Common myeloid progenitor, CD34-positive (primary cell): ENCODE measurements at regions of chr13 and their contacts with region 1.

Region 1: DNA sequence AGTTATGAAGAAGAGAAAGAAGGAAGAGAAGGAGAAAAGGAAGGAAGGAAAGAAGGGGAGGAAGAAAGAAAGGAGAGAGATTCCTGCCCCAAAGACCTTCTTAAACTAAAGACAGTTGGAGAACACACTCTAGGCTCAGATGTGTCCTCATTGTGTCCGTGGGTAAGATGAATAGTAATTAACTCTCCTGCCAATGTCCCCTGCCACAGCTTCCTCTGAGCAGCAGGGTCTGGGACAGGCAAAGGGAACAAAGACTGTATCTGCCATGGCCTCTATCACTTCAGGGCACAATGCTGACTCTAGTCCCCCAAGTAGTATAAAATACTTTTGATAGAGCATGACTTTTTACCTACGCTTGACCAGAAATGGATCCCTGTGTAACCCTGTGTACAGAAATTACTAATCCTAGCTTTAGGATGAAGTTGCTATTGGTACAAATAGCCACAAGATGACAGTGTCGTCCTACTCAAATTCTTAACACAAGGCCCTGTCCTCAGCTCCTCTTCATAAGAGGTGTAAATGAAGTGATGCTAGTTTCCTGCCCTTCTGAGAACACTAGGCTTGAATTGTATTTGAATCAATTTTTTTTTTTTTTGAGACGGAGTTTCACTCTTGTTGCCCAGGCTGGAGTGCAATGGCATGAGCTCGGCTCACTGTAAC is 186.2 kb upstream of the GPR12 start:
- DNase-seq: peak; percentile 70 to 83 (median 80)
- H3K4me3 ChIP-seq: no peak overlapping the region
- H3K27ac ChIP-seq: no peak overlapping the region
- H3K4me1 ChIP-seq: peaks cover 0 to 7% (median 2%) of the 10 kb centered on the region in 4 experiments
- H3K27me3 ChIP-seq: no peaks in the 10 kb centered on the region

Region 2: GRCh38 chr13:26957182-26957581 is 10.4 kb after region 1 on chr13:
- CTCF ChIA-PET with region 1: interaction called, 12 read pairs
- POLR2A ChIA-PET with region 1: no interaction called
- DNase-seq: peak in 2 of 3 donors; percentile 46 to 64
- H3K4me3 ChIP-seq: no peak overlapping the region
- H3K27ac ChIP-seq: no peak overlapping the region
- H3K4me1 ChIP-seq: peaks cover 0 to 9% (median 6%) of the 10 kb centered on the region in 4 experiments
- H3K27me3 ChIP-seq: no peaks in the 10 kb centered on the region

Region 3: GRCh38 chr13:26965952-26966700 is 19.3 kb after region 1 on chr13:
- CTCF ChIA-PET with region 1: interaction called, 22 read pairs
- POLR2A ChIA-PET with region 1: interaction called, 7 read pairs
- DNase-seq: no peak
- H3K4me3 ChIP-seq: no peak overlapping the region
- H3K27ac ChIP-seq: no peak overlapping the region
- H3K4me1 ChIP-seq: peaks cover 0 to 8% (median 5%) of the 10 kb centered on the region in 4 experiments
- H3K27me3 ChIP-seq: no peaks in the 10 kb centered on the region

Region 4: GRCh38 chr13:26971990-26972887 is 25.4 kb after region 1 on chr13:
- CTCF ChIA-PET with region 1: interaction called, 22 read pairs
- POLR2A ChIA-PET with region 1: no interaction called
- DNase-seq: peak; percentile 73 to 87 (median 77)
- H3K4me3 ChIP-seq: no peak overlapping the region
- H3K27ac ChIP-seq: no peak overlapping the region
- H3K4me1 ChIP-seq: peaks cover 0 to 23% (median 9%) of the 10 kb centered on the region in 4 experiments
- H3K27me3 ChIP-seq: no peaks in the 10 kb centered on the region

Region 5: DNA sequence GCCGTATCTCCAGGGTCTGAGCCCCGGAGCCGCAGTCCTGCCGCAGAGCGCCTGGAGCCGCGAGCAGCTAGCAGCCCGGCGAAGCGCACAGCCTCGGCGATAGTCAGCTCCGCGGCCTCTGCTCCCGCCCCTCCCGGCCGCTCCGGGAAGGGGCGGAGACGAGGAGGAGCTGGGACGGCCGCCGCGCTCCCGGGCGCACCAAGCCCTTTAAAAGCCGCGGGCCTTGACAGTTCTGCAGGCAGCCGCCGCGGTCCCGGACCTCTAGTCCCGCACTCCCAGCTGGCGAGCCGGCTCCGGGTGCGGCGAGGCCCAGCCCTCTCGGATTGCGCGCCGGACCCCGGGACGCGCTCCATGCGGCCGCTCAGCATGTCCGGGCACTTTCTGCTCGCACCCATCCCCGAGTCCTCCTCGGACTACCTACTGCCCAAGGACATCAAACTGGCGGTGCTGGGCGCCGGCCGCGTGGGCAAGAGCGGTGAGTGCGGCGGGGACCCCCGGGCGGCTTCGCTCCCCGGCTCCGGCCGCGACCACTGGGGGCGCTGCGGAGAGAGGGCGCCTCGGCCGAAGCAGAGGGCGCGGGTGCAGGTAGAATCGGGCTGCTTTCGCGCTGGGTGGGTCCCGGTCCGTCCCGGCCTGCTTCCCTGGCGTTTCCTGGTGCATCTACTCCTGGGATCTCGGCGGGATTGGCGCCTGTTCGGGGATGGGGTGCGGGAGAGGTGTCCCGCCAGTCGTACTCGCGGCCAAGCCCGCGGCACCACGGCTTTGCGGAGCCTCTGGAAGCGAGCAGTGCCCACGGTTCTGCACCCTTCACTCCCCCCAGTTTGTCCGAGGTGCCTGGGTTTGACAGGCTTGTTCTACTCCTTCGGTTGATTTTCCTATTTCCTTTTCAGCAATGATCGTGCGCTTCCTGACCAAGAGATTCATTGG is 324.0 kb after region 1 on chr13 and contains the start of gene RASL11A:
- CTCF ChIA-PET with region 1: interaction called, 11 read pairs
- POLR2A ChIA-PET with region 1: no interaction called
- DNase-seq: peak; percentile 61 to 80 (median 72)
- H3K4me3 ChIP-seq: peak within 1 kb of the TSS; percentile 64 to 83 (median 79)
- H3K27ac ChIP-seq: no peak within 1 kb of the TSS
- H3K4me1 ChIP-seq: peaks cover 0 to 25% (median 19%) of the 10 kb centered on the region in 4 experiments
- H3K27me3 ChIP-seq: peaks cover 0 to 35% (median 7%) of the 10 kb centered on the region in 5 experiments

Region 6: GRCh38 chr13:27353166-27353583 is 406.4 kb after region 1 on chr13:
- CTCF ChIA-PET with region 1: interaction called, 165 read pairs
- POLR2A ChIA-PET with region 1: no interaction called
- DNase-seq: no peak
- H3K4me3 ChIP-seq: no peak overlapping the region
- H3K27ac ChIP-seq: no peak overlapping the region
- H3K4me1 ChIP-seq: no peaks in the 10 kb centered on the region
- H3K27me3 ChIP-seq: peaks cover 0 to 3% (median 0%) of the 10 kb centered on the region in 5 experiments

Region 7: GRCh38 chr13:27362064-27362883 is 415.5 kb after region 1 on chr13:
- CTCF ChIA-PET with region 1: interaction called, 165 read pairs
- POLR2A ChIA-PET with region 1: interaction called, 3 read pairs
- DNase-seq: peak; percentile 80 to 88 (median 84)
- H3K4me3 ChIP-seq: peak overlapping the region; percentile 24 to 87 (median 63)
- H3K27ac ChIP-seq: no peak overlapping the region
- H3K4me1 ChIP-seq: peaks cover 0 to 15% (median 10%) of the 10 kb centered on the region in 4 experiments
- H3K27me3 ChIP-seq: peaks cover 0 to 19% (median 4%) of the 10 kb centered on the region in 5 experiments

Region 8: GRCh38 chr13:27424246-27425157 is 477.7 kb after region 1 on chr13 and contains the start of gene GTF3A:
- CTCF ChIA-PET with region 1: no interaction called
- POLR2A ChIA-PET with region 1: no interaction called
- DNase-seq: peak; percentile 84 to 92 (median 90)
- H3K4me3 ChIP-seq: peak within 1 kb of the TSS; percentile 33 to 93 (median 80)
- H3K27ac ChIP-seq: peak within 1 kb of the TSS; percentile 77 to 85
- H3K4me1 ChIP-seq: peaks cover 32 to 58% (median 46%) of the 10 kb centered on the region in 4 experiments
- H3K27me3 ChIP-seq: no peaks in the 10 kb centered on the region

Region 9: DNA sequence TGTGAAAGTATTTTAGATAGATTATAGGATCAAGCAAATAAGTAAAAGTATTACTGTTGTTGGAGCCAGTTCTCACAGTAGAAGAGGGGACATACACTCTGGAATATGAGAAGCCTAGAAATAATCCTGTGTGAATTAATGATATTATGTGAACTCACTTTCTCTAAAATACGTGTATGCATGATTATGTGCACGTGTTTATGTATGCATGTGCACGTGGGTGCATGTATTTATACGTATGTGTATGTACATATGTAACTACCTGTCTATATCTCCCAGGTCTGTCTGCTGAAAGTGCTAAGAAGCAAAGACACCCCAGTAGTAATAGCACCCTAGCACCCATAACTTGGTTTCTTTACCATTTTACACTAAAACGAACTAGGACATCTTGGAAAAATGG is 931.5 kb after region 1 on chr13:
- CTCF ChIA-PET with region 1: no interaction called
- POLR2A ChIA-PET with region 1: no interaction called
- DNase-seq: no peak
- H3K4me3 ChIP-seq: no peak overlapping the region
- H3K27ac ChIP-seq: no peak overlapping the region
- H3K4me1 ChIP-seq: no peaks in the 10 kb centered on the region
- H3K27me3 ChIP-seq: peaks cover 6 to 61% (median 25%) of the 10 kb centered on the region in 5 experiments